AG04450 (cell line): ENCODE measurements at regions of chr7 and their contacts with region 1.

Region 1: GRCh38 chr7:93902777-93903423 is 3.5 kb upstream of the GNGT1 start:
- DNase-seq: peak; percentile 41
- H3K4me3 ChIP-seq: no peak overlapping the region
- H3K27ac ChIP-seq: no peak overlapping the region
- H3K27me3 ChIP-seq: no peaks in the 10 kb centered on the region
- CTCF ChIP-seq: peak; percentile 90

Region 2: DNA sequence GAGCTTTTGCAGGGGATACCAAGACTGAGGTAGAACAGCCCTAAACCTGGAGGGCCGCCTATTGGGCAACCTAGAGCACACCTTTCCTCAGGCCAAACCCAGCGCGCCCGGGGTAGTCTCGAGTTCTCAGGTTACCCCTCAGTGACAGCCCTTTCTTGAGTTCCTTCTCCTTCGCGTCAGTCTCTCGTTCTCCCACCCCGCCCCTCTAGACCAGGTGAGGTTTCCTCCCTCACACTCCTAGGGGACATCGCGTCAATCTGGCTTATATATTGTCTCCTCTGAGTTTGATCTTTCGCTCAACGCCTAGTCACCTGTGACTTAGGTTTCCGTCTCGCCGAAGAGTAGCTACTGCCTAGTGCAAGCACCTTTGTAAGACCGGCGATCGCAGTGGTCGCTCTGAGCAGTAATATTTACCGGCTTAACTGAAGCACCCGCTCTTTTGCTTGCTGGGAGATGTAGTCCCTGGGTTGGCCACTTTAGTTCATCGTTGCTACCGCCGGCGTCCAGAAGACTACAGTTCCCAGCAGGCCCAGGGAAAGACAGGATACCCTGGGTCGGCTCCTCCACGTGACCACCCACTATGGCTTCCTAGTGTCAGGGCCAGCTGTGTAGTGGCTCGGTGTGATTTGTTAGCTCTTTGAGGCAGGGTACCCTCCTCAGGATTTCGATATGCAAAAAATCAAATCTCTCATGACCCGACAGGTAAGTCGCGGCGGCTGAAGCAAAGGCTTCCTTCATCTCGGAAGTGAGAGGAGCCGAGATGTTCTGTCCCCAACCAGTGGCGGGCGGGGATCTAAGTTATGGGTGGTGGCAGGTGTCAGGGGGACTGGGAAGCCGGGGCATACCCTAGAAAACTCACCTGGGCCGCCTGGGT is 670.9 kb before region 1 on chr7 and contains the start of gene VPS50:
- CTCF ChIA-PET with region 1: no interaction called
- POLR2A ChIA-PET with region 1: no interaction called
- DNase-seq: peak; percentile 89
- H3K4me3 ChIP-seq: peak within 1 kb of the TSS; percentile 93
- H3K27ac ChIP-seq: no peak within 1 kb of the TSS
- H3K27me3 ChIP-seq: peaks cover 3% of the 10 kb centered on the region
- CTCF ChIP-seq: no peak
- polyA plus RNA-seq, gene VPS50: 15.2 and 21.8 TPM in 2 replicates

Region 3: GRCh38 chr7:93861325-93861949 is 41.5 kb before region 1 on chr7:
- CTCF ChIA-PET with region 1: no interaction called
- POLR2A ChIA-PET with region 1: no interaction called
- DNase-seq: no peak
- H3K4me3 ChIP-seq: no peak overlapping the region
- H3K27ac ChIP-seq: no peak overlapping the region
- H3K27me3 ChIP-seq: no peaks in the 10 kb centered on the region
- CTCF ChIP-seq: peak; percentile 38

Region 4: GRCh38 chr7:93890464-93891068 is 12.3 kb before region 1 on chr7 and contains the start of gene TFPI2:
- CTCF ChIA-PET with region 1: interaction called, 11 read pairs
- POLR2A ChIA-PET with region 1: no interaction called
- DNase-seq: no peak
- H3K4me3 ChIP-seq: peak within 1 kb of the TSS; percentile 71
- H3K27ac ChIP-seq: no peak within 1 kb of the TSS
- H3K27me3 ChIP-seq: no peaks in the 10 kb centered on the region
- CTCF ChIP-seq: 0 out of 2 replicates have a peak, but pooled peaks have one; percentile 17
- polyA plus RNA-seq, gene TFPI2: 27.9 and 31.0 TPM in 2 replicates

Region 5: GRCh38 chr7:93914325-93915081 is 11.6 kb after region 1 on chr7:
- CTCF ChIA-PET with region 1: interaction called, 12 read pairs
- POLR2A ChIA-PET with region 1: no interaction called
- DNase-seq: peak; percentile 23
- H3K4me3 ChIP-seq: no peak overlapping the region
- H3K27ac ChIP-seq: no peak overlapping the region
- H3K27me3 ChIP-seq: no peaks in the 10 kb centered on the region
- CTCF ChIP-seq: no peak

Region 6: DNA sequence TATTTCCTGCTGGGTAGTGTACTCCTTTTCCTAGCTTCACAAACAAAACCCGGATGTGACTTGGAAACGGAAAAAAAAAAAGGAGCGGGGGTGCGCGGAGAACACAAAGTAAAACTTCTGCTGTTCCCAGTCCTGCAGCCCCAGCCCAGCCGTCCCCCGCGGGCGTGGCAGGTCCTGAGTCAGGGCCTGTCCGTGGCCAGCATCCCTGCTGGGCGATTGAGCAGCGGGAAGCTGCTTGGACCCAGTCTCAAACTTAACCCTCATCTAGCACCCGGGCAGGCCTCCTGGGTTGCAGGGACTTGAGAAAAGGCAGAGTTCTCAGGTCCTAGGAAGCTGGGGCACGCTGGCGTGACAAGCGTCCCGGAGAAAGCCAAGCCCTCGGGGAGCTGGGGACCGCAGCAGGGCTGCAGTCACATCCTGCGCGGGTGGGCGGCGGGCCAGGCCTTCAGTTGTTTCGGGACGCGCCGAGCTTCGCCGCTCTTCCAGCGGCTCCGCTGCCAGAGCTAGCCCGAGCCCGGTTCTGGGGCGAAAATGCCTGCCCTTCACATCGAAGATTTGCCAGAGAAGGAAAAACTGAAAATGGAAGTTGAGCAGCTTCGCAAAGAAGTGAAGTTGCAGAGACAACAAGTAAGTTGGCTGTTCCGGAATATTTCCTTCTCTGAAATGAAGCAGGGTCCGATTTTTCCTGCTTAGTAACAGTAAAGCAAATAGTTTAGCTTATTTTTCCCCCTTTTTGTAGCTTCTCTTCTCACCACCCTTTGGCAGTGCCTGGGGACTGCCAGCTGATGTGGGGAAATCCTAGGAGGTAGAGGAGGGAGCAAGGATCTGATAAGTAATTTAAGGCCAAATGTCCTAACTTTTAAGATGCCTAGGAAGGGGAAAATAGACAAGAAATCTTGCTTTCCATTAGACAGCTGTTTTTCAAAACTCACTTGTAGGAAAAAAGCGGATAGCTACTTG is 19.0 kb after region 1 on chr7 and contains the start of gene GNG11:
- CTCF ChIA-PET with region 1: interaction called, 16 read pairs
- POLR2A ChIA-PET with region 1: no interaction called
- DNase-seq: no peak
- H3K4me3 ChIP-seq: peak within 1 kb of the TSS; percentile 82
- H3K27ac ChIP-seq: peak within 1 kb of the TSS; percentile 93
- H3K27me3 ChIP-seq: no peaks in the 10 kb centered on the region
- CTCF ChIP-seq: no peak
- polyA plus RNA-seq, gene GNG11: 13.8 and 19.7 TPM in 2 replicates

Region 7: DNA sequence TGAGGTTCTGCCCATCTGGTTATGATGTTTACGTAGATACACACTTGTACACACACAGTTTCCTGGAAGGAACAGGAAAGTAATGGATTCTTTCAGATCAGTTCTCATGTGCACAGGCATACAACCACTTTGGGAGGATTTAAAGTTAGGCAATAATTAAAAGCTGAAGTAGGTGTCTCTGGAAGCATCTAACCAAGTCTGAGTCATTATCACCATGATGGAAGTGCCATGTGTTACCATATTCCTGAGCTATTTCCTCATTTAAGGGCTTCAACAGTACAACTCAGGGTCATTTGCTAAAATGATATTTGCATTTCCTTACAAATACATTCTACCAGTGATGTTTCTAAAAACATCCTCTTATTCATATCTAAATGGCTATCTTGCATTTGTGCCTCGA is 142.7 kb after region 1 on chr7:
- CTCF ChIA-PET with region 1: no interaction called
- POLR2A ChIA-PET with region 1: no interaction called
- DNase-seq: no peak
- H3K4me3 ChIP-seq: no peak overlapping the region
- H3K27ac ChIP-seq: no peak overlapping the region
- H3K27me3 ChIP-seq: no peaks in the 10 kb centered on the region
- CTCF ChIP-seq: no peak

Region 8: DNA sequence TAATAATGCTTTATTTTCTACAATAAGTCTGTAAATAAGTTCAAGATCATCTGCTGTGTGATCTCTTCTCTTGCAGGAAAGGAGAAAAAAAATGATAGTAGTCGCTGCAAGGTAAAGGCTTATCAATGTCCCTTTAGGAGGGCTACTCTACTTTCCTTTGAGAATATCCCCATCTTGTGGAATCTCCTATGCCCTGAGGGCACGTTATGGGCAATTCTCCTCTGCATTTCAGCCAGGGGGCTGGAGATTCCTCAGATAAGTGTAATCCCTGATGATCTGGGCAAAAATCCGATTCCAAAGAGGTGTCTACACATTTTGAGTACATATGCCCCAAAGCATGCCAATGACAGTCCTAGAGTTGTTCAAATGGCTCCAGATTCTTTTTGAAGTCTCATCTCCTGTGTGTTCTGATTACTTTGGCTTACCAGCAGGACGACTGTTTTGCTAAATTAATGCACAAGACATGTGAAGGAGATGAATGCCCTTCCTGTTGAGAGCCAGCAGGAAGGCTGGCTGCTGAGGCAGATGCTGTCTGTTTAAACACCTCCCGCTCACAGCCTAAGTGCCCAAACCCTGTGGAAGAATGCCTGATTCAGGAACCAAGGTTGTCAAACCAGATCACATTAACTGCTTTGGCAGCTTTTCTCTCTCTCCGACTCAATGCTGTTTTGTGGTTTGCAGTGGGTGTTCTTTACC is 320.6 kb after region 1 on chr7:
- CTCF ChIA-PET with region 1: interaction called, 21 read pairs
- POLR2A ChIA-PET with region 1: no interaction called
- DNase-seq: peak; percentile 34
- H3K4me3 ChIP-seq: no peak overlapping the region
- H3K27ac ChIP-seq: no peak overlapping the region
- H3K27me3 ChIP-seq: no peaks in the 10 kb centered on the region
- CTCF ChIP-seq: peak; percentile 74